Lower leg skin (tissue), 4 donors: ENCODE measurements at regions of chr16 and their contacts with region 1.

Region 1: GRCh38 chr16:48526058-48526957 is 83.7 kb downstream of the N4BP1 start:
- DNase-seq: peak in 1 of 2 donors; percentile 77
- H3K4me3 ChIP-seq: no peak overlapping the region
- CTCF ChIP-seq: peak in 1 of 3 donors; percentile 14
- POLR2A ChIP-seq: no peak

Region 2: GRCh38 chr16:48284772-48285409 is 241.4 kb before region 1 on chr16:
- intact Hi-C with region 1: no loop called
- DNase-seq: no peak
- H3K4me3 ChIP-seq: no peak overlapping the region
- CTCF ChIP-seq: no peak
- POLR2A ChIP-seq: no peak

Region 3: DNA sequence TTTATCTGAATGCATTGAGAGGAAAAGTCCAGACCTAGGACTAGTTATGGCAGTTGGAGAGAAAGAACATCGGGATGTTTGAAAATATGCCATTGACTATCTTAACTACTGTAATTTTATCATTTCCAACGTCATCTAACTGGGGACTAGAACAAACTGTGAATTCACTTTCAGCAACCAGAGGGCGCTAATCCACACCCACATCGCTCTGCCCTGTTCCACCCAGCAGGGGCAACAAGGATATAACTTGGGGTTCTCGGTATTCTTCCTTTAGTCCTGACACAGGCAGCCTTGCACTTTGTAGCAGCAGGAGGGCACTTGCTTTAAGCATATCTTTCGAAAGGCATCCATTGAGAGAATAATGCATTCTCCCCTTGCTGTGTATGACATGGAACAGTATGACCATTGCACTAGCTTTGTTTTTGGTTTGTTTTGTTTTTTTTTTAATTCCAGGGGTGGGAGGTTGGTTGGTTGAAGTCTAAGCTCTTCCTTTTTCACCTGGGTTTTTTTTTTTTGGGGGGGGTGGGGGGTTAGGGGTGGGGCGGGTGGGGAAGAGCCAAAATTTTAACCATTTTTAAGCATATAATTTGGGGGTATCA is 172.6 kb before region 1 on chr16:
- intact Hi-C with region 1: loop called (anchors 5 kb)
- DNase-seq: peak in 1 of 2 donors; percentile 60
- H3K4me3 ChIP-seq: no peak overlapping the region
- CTCF ChIP-seq: peak in 1 of 3 donors; percentile 75
- POLR2A ChIP-seq: no peak

Region 4: DNA sequence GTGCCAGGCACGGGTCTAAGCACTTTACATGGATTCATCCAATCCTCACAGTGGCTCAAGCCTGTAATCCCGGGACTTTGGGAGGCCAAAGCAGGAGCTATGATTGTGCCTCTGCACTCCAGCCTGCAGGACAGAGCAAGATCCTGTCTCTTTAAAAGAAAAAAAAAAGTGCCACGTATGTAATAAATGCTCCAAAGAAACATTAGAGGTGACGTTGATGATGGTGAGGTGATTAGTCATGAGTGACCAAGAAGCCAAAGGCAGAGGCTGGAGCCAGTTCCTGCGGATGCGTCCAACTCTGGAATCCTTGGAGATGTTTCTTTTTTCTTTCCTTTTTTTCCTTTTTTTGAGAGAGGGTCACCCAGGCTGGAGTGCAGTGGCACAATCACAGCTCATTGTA is 81.7 kb before region 1 on chr16:
- intact Hi-C with region 1: no loop called
- DNase-seq: no peak
- H3K4me3 ChIP-seq: no peak overlapping the region
- CTCF ChIP-seq: no peak
- POLR2A ChIP-seq: no peak

Region 5: GRCh38 chr16:48623304-48624016 is 97.2 kb after region 1 on chr16:
- intact Hi-C with region 1: loop called (anchors 10 kb)
- DNase-seq: peak; percentile 72 to 96
- H3K4me3 ChIP-seq: peak overlapping the region; percentile 16
- CTCF ChIP-seq: peak in 2 of 3 donors; percentile 63 to 72
- POLR2A ChIP-seq: no peak